ENCODE measurements at regions of chr3 and their contacts with region 1.

Region 1: GRCh38 chr3:12830785-12831156 is 10.6 kb downstream of the RPL32 start:
- DNase-seq: no peak
- ATAC-seq: no peak
- H3K4me3 ChIP-seq: no peak overlapping the region
- H3K27ac ChIP-seq: peak overlapping the region in 3 of 4 donors; percentile 22 to 55 (median 39)
- H3K4me1 ChIP-seq: peaks cover 0 to 16% of the 10 kb centered on the region in 2 donors
- H3K27me3 ChIP-seq: no peaks in the 10 kb centered on the region
- CTCF ChIP-seq: peak in 1 of 5 experiments; percentile 12
- POLR2A ChIP-seq: no peak

Region 2: DNA sequence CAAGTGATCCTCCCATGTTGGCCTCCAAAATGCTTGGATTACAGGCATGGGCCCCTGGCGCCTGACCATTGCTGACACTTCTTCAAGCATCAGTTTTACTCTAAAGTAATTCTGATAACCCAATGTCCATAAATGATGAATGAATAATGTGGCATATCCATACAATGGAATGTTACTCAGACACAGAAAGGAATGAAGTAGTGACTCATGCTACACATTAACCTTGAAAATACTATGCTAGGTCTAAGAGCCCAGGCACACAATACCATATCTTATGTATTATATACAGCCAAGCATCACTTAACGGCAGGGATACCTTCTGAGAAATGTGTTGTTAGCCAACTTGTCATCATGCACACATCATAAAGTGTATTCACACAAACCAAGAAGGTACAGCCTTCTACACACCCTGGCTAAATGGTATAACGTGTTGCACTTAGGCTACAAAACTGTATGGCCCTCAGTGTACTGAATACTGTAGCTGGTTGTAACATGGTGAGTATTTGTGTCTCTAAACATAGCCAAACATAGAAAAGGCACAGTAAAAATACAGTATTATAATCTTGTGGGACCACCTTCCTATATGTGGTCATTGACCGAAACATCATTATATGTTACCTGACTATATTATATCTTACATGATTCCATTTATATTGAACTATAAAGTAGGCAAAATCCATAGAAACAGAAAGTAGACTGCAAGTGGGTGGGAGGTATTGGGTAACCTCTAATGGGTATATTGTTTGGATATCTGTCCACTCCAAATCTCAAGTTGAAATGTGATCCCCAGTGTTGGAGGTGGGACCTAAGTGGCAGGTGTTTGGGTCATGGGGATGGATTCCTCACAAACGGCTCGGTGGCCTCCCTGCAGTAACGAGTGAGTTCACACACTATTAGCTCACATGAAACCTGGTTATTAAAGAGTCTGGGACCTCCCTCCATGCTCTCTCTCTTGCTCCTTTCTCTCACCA is 242.4 kb before region 1 on chr3:
- in situ Hi-C with region 1: no loop called
- intact Hi-C with region 1: loop called (anchors 10 kb)
- DNase-seq: no peak
- ATAC-seq: no peak
- H3K4me3 ChIP-seq: no peak overlapping the region
- H3K27ac ChIP-seq: peak overlapping the region; percentile 67 to 74 (median 68)
- H3K4me1 ChIP-seq: peaks cover 28 to 32% of the 10 kb centered on the region in 2 donors
- H3K27me3 ChIP-seq: no peaks in the 10 kb centered on the region
- CTCF ChIP-seq: no peak
- POLR2A ChIP-seq: no peak

Region 3: DNA sequence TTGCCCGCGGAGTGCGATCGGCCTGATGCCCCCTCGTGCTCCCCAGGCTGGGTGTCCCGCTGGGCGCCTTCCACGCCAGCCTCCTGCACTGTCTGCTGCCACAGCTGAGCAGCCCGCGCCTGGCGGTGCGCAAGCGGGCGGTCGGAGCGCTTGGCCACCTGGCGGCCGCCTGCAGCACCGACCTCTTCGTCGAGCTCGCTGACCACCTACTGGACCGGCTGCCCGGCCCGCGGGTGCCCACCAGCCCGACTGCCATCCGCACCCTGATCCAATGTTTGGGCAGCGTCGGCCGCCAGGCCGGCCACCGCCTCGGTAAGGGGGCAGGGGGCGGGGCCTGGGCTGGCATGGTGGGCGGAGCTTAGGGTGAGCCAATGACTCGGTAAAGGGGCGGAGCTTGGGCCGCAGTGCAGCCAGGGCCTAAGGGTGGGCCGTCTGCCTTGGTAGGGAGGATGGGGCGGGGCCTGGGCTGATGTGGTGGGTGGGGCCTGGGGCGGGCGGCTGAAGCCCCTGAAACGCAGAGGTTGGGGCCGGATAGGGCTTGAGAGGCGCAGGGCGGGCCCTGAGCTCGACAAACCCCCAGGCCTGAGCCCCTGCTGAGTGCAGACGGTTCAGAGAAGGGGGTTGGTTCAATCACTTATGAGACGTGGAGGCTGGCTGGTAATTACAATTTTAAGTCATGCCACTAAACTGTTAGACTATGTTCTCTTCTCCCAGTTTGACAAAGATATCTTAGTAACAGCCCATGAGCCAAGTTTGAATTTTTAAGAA is 20.6 kb before region 1 on chr3:
- in situ Hi-C with region 1: no loop called
- intact Hi-C with region 1: loop called (anchors 2 kb)
- DNase-seq: peak; percentile 84 to 90
- ATAC-seq: peak; percentile 79 to 88
- H3K4me3 ChIP-seq: peak overlapping the region; percentile 54 to 90 (median 64)
- H3K27ac ChIP-seq: peak overlapping the region; percentile 71 to 99 (median 92)
- H3K4me1 ChIP-seq: peaks cover 40 to 48% of the 10 kb centered on the region in 2 donors
- H3K27me3 ChIP-seq: no peaks in the 10 kb centered on the region
- CTCF ChIP-seq: peak; percentile 60 to 94 (median 80)
- POLR2A ChIP-seq: peak; percentile 1 to 34

Region 4: GRCh38 chr3:12891985-12892839 is 61.4 kb after region 1 on chr3:
- in situ Hi-C with region 1: no loop called
- intact Hi-C with region 1: no loop called
- DNase-seq: peak; percentile 46 to 56
- ATAC-seq: peak in 1 of 2 donors; percentile 76
- H3K4me3 ChIP-seq: peak overlapping the region in 3 of 4 donors; percentile 18 to 33 (median 30)
- H3K27ac ChIP-seq: no peak overlapping the region
- H3K4me1 ChIP-seq: peaks cover 20 to 24% of the 10 kb centered on the region in 2 donors
- H3K27me3 ChIP-seq: no peaks in the 10 kb centered on the region
- CTCF ChIP-seq: peak; percentile 79 to 94 (median 87)
- POLR2A ChIP-seq: no peak

Measured in gastrocnemius medialis (tissue), 4 donors.